Activated CD4-positive, alpha-beta memory T cell treated with anti-CD3 and anti-CD28 coated beads for 36 hours (primary cell): ENCODE measurements at regions of chrX and their contacts with region 1.

Region 1: GRCh38 chrX:9341291-9342201 is 123.3 kb upstream of the TBL1X start:
- DNase-seq: peak; percentile 76
- H3K4me3 Mint-ChIP-seq: peak overlapping the region; percentile 30
- H3K27ac Mint-ChIP-seq: peak overlapping the region; percentile 84
- H3K4me1 Mint-ChIP-seq: peaks cover 30% of the 10 kb centered on the region
- H3K27me3 Mint-ChIP-seq: no peaks in the 10 kb centered on the region

Region 2: GRCh38 chrX:9318213-9318612 is 23.3 kb before region 1 on chrX:
- CTCF ChIA-PET with region 1: interaction called, 5 read pairs
- POLR2A ChIA-PET with region 1: interaction called, 3 read pairs
- intact Hi-C with region 1: loop called (anchors 2 kb)
- DNase-seq: peak; percentile 51
- H3K4me3 Mint-ChIP-seq: no peak overlapping the region
- H3K27ac Mint-ChIP-seq: no peak overlapping the region
- H3K4me1 Mint-ChIP-seq: peaks cover 18% of the 10 kb centered on the region
- H3K27me3 Mint-ChIP-seq: no peaks in the 10 kb centered on the region

Region 3: DNA sequence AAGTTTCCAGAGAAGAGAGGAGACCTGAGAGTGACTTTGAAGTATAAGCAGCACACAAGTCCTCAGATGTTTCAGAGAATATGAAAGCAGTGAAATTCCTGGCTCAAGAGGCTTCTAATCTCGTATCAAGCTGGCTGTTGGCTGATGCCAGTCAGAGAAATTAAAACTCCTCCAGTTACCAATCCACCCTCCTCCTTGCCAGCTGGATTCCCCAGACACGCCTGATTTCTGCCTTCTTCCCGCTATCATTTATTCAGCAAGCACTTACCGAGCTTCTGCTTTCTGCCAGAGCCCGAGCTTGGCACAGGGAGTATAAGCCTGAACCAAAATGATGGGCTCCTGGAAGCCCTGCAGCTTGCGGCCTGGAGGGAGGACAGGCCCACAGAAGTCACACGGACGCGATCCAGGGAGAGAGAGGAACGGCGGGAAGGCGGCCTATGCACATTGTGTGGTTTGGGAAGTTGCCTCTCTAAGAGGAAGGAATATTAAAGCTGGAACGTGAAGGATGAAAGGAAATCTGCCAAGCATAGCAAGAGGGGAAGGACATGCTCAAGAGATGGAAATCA is 20.9 kb after region 1 on chrX:
- CTCF ChIA-PET with region 1: no interaction called
- POLR2A ChIA-PET with region 1: no interaction called
- intact Hi-C with region 1: no loop called
- DNase-seq: no peak
- H3K4me3 Mint-ChIP-seq: no peak overlapping the region
- H3K27ac Mint-ChIP-seq: no peak overlapping the region
- H3K4me1 Mint-ChIP-seq: no peaks in the 10 kb centered on the region
- H3K27me3 Mint-ChIP-seq: no peaks in the 10 kb centered on the region

Region 4: GRCh38 chrX:9456250-9457074 is 114.9 kb after region 1 on chrX:
- CTCF ChIA-PET with region 1: no interaction called
- POLR2A ChIA-PET with region 1: no interaction called
- intact Hi-C with region 1: loop called (anchors 1 kb)
- DNase-seq: peak; percentile 44
- H3K4me3 Mint-ChIP-seq: peak overlapping the region; percentile 41
- H3K27ac Mint-ChIP-seq: peak overlapping the region; percentile 80
- H3K4me1 Mint-ChIP-seq: peaks cover 31% of the 10 kb centered on the region
- H3K27me3 Mint-ChIP-seq: no peaks in the 10 kb centered on the region

Region 5: GRCh38 chrX:9899640-9900111 is 558.1 kb after region 1 on chrX:
- CTCF ChIA-PET with region 1: no interaction called
- POLR2A ChIA-PET with region 1: no interaction called
- intact Hi-C with region 1: no loop called
- DNase-seq: peak; percentile 46
- H3K4me3 Mint-ChIP-seq: no peak overlapping the region
- H3K27ac Mint-ChIP-seq: no peak overlapping the region
- H3K4me1 Mint-ChIP-seq: peaks cover 23% of the 10 kb centered on the region
- H3K27me3 Mint-ChIP-seq: peaks cover 15% of the 10 kb centered on the region